Posterior vena cava (tissue), 2 donors: ENCODE measurements at regions of chr16 and their contacts with region 1.

Region 1: DNA sequence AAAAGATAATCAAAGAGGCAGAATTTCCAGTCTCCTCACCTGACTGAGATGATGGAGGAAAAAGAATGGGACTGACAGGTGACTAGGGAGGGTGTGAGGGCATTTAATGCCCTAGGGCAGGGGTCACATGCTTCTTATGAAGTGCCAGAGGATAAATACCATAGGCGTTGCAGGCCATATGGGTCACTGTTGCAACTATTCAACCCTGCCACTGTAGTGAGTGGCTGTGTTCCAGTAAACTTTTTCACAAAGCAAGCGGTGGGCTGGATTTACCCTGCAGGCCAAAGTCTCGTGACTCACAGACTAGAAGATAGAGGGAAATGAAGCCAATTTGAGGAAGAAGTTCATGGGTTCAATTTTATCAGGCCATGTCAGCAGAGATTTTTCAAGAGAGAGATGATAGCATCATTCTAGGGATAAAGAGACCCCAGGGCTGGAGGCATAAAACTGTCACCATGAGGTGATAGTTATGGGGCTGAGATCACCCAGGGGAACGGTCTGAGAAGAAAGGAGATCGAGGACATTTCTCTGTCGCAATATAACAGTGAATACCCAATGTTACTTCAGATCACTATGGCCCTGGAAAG is 8.6 kb downstream of the ARHGAP17 start:
- DNase-seq: no peak

Region 2: GRCh38 chr16:24986512-24987303 is 19.9 kb before region 1 on chr16:
- intact Hi-C with region 1: loop called in 1 of 2 experiments (anchors 1 kb)
- DNase-seq: no peak